ENCODE measurements at regions of chr10 and their contacts with region 1.

Region 1: GRCh38 chr10:12710594-12711349 is 290.7 kb downstream of the CCDC3 start:
- DNase-seq: peak; percentile 45
- H3K4me3 ChIP-seq: no peak overlapping the region
- CTCF ChIP-seq: peak; percentile 94

Region 2: GRCh38 chr10:12214763-12215218 is 496.0 kb before region 1 on chr10:
- CTCF ChIA-PET with region 1: interaction called, 69 read pairs
- POLR2A ChIA-PET with region 1: no interaction called
- DNase-seq: no peak
- H3K4me3 ChIP-seq: no peak overlapping the region
- CTCF ChIP-seq: peak; percentile 17

Region 3: GRCh38 chr10:12264204-12264940 is 446.4 kb before region 1 on chr10:
- CTCF ChIA-PET with region 1: interaction called, 154 read pairs
- POLR2A ChIA-PET with region 1: no interaction called
- DNase-seq: no peak
- H3K4me3 ChIP-seq: peak overlapping the region; percentile 53
- CTCF ChIP-seq: peak; percentile 89

Region 4: DNA sequence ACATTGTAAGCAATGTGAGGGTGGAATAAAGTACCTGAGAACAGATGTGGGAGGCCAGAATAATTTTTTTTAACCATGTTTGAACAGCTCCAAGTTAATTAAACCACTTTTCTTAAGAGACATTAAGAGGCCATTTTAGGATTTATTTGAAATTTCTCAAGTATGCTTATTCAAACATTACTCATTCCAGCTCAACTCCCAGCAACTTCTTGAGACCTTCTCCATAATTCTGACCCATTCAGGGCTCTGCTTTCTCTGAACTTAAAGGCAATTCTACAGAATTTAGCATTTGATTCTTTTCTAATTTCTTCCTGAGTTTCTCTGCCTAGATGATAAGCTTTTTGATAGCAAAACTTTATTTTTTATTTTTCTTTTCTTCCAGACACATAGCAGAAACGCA is 46.9 kb before region 1 on chr10:
- CTCF ChIA-PET with region 1: interaction called, 11 read pairs
- POLR2A ChIA-PET with region 1: no interaction called
- DNase-seq: no peak
- H3K4me3 ChIP-seq: no peak overlapping the region
- CTCF ChIP-seq: no peak

Region 5: GRCh38 chr10:12844811-12845533 is 134.2 kb after region 1 on chr10:
- CTCF ChIA-PET with region 1: no interaction called
- POLR2A ChIA-PET with region 1: no interaction called
- DNase-seq: peak; percentile 34
- H3K4me3 ChIP-seq: no peak overlapping the region
- CTCF ChIP-seq: no peak

Region 6: GRCh38 chr10:13074561-13075451 is 364.0 kb after region 1 on chr10:
- CTCF ChIA-PET with region 1: interaction called, 23 read pairs
- POLR2A ChIA-PET with region 1: no interaction called
- DNase-seq: no peak
- H3K4me3 ChIP-seq: no peak overlapping the region
- CTCF ChIP-seq: peak; percentile 86

Measured in AG04449 (cell line).